Right ventricle myocardium superior (tissue), 1 donor: ENCODE measurements at regions of chr12 and their contacts with region 1.

Region 1: GRCh38 chr12:69585189-69586062 is at the start of gene CCT2:
- DNase-seq: peak; percentile 99
- ATAC-seq: peak; percentile 100
- total RNA-seq, gene CCT2: 84.8 TPM

Region 2: DNA sequence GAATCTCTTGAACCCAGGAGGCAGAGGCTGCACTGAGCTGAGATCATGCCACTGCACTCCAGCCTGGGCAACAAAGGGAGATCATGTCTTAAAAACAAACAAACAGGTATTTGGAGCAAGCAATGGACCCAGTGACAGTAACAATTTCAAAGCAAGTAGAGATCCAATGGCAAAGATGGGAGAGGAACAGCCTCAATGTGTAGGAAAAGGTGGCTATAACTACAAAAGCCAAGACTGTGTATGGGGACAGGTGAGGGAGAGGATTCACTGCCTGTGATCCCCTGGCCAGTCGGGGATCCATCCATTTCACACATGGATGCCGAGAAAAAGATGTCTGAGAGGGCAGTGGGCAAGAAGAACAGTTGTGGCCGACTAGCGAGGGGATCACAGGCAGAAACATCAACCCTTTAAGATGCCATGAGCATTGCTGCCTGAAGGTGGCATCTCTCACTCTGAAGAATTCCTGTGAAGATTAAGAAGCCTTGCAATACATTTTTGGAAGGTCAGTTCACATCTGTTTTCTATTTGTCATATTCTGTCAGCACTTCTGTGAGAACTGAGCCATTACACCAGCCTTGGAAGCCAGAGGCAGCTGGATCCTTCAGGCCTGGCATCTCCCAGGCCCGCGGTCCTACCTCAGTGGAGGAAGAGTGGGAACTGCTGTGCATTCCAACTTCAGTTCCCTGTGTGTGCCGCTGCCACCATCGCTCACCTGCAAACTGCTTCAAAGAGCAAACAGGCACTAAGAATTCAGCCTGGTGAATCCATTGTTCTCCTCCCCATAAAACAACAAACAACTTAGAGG is 169.8 kb before region 1 on chr12:
- intact Hi-C with region 1: no loop called
- DNase-seq: peak; percentile 61
- ATAC-seq: peak; percentile 92

Region 3: DNA sequence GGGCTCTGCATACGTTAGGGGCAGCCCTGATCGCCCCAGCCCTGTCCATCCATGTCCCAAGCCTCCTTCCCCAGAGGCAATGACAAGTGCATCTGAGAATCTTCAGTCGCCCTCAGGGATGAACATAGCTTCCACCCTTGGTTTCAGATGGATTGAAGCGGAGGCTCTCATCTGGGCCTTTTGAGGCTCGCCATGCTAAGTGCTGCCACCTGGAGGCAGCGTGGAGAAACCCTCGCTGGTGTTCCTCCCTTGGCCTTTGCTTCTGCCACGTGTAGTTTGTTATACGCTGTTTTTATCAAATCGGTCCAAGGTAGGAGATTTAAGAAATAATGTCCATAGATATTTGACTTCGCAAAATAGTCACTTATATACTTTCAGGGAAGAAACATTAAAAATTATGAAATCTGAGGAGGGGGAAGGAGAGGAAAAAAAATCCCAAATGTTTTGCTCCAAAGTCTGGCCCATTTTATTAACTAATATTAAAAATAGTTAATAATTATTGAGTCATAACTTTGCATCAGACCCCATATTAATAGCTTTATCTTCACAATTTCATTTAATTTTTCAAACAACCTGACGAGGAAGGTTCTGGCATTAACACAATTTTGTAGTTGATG is 54.1 kb after region 1 on chr12:
- intact Hi-C with region 1: loop called (anchors 5 kb)
- DNase-seq: peak; percentile 75
- ATAC-seq: peak; percentile 70